HEK293T (cell line): ENCODE measurements at regions of chr1 and their contacts with region 1.

Region 1: GRCh38 chr1:116661633-116662032 is 5.9 kb downstream of the IGSF3 start:
- DNase-seq: no peak

Region 2: GRCh38 chr1:116679091-116679827 is 17.6 kb after region 1 on chr1:
- CTCF ChIA-PET with region 1: no interaction called
- POLR2A ChIA-PET with region 1: no interaction called
- DNase-seq: no peak

Region 3: DNA sequence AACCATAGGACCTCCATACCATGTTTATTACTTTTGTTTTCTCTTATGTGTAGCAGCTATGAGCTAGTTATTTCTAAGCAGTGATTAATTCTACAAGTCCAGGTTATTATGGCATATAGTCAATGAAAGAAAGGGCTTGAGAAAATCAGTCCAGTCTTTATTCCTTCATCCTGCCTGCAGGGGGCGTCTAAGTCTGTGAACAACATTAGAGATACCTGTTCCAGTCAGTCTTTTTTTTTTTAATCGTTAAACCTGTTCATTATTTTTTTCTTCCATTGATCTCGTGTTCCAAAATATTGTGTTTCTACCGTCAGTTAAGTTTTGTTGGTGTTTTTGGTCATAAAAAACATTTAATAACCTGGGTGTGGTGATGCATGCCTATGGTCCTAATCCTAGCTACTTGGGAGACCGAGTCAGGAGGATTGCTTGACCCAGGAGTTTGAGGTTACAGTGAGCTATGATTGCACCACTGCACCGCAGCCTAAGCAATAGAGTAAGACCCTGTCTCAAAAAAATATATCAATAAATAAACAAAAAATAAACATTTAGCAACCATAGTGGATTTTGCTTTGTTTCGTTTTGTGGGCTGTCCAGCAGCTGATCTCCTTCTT is 63.2 kb after region 1 on chr1:
- CTCF ChIA-PET with region 1: interaction called, 10 read pairs
- POLR2A ChIA-PET with region 1: no interaction called
- DNase-seq: peak; percentile 70